ENCODE measurements at regions of chr7 and their contacts with region 1.

Region 1: GRCh38 chr7:73567846-73568685 is 10.3 kb downstream of the TBL2 start:
- DNase-seq: no peak
- H3K4me3 ChIP-seq: no peak overlapping the region
- H3K27ac ChIP-seq: no peak overlapping the region
- H3K4me1 ChIP-seq: no peaks in the 10 kb centered on the region
- H3K27me3 ChIP-seq: no peaks in the 10 kb centered on the region
- CTCF ChIP-seq: no peak

Region 2: GRCh38 chr7:73423519-73424488 is 144.3 kb before region 1 on chr7:
- CTCF ChIA-PET with region 1: no interaction called
- POLR2A ChIA-PET with region 1: no interaction called
- intact Hi-C with region 1: no loop called
- DNase-seq: no peak
- H3K4me3 ChIP-seq: no peak overlapping the region
- H3K27ac ChIP-seq: no peak overlapping the region
- H3K4me1 ChIP-seq: no peaks in the 10 kb centered on the region
- H3K27me3 ChIP-seq: no peaks in the 10 kb centered on the region
- CTCF ChIP-seq: no peak

Region 3: DNA sequence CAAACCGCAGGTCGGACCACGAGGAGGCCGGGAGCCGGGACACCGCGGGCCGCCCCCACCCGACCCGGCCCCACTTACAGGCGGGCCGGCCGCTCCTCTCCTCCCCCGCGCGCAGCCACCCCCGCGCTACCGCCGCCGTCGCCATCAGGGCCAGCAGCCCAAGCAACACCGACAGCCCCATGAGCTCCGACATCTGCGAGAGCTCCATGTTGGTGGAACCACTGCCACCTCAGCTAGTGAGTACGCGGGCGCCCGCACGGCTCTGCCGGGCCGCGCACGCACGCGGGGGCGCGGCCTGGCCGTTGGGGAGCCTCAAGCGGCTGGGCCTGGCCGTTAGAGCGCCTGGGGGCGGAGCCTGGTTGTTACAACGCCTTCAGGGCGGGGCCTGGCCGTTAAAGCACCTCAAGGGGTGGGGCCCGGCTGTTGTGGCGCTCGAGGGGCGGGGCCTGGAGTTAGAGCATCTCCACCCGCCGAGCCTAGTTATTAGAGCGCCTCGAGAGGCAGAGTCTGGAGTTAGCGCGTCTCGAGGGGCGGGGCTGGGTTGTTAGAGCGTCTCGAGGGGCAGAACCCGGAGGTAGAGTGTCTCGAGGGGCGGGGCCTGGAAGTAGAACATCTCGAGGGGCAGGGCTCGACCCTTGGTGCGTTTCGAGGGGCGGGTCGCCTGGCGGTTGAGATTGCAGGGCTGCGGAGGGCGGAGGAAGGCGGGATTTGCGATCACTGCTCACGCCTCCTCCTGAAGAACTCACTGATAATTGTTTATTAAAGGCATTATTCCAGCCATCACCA is 10.5 kb after region 1 on chr7 and contains the start of gene TBL2:
- CTCF ChIA-PET with region 1: no interaction called
- POLR2A ChIA-PET with region 1: interaction called, 10 read pairs
- intact Hi-C with region 1: no loop called
- DNase-seq: peak; percentile 95 to 99
- H3K4me3 ChIP-seq: peak within 1 kb of the TSS; percentile 96
- H3K27ac ChIP-seq: peak within 1 kb of the TSS; percentile 73
- H3K4me1 ChIP-seq: peaks cover 16% of the 10 kb centered on the region
- H3K27me3 ChIP-seq: no peaks in the 10 kb centered on the region
- CTCF ChIP-seq: no peak
- total RNA-seq, gene TBL2: 43.9 and 49.2 TPM in 2 replicates